ENCODE measurements at regions of chrX and their contacts with region 1.

Region 1: GRCh38 chrX:43002526-43003203 is 224.7 kb upstream of the PPP1R2C start:
- DNase-seq: peak; percentile 51
- ATAC-seq: peak; percentile 94
- H3K4me3 ChIP-seq: no peak overlapping the region
- H3K27ac ChIP-seq: peak overlapping the region; percentile 76; the same call in 1 of the 2 replicates
- H3K4me1 ChIP-seq: peaks cover 8% of the 10 kb centered on the region; the same call in 1 of the 2 replicates
- H3K27me3 ChIP-seq: no peaks in the 10 kb centered on the region
- CTCF ChIP-seq: no peak
- EP300 ChIP-seq: peak; percentile 38 to 75; a peak in 2 of 4 replicates
- POLR2A ChIP-seq: no peak
- RAD21 ChIP-seq: no peak

Region 2: GRCh38 chrX:42869659-42870476 is 132.8 kb before region 1 on chrX:
- CTCF ChIA-PET with region 1: no interaction called
- POLR2A ChIA-PET with region 1: no interaction called
- RAD21 ChIA-PET with region 1: no interaction called
- SMC1A ChIA-PET with region 1: no interaction called
- in situ Hi-C with region 1: no loop called
- intact Hi-C with region 1: loop called (anchors 5 kb)
- DNase-seq: peak; percentile 72
- ATAC-seq: peak; percentile 92
- H3K4me3 ChIP-seq: no peak overlapping the region
- H3K27ac ChIP-seq: peak overlapping the region; percentile 1; the same call in 1 of the 2 replicates
- H3K4me1 ChIP-seq: peaks cover 6% of the 10 kb centered on the region
- H3K27me3 ChIP-seq: no peaks in the 10 kb centered on the region
- CTCF ChIP-seq: no peak
- EP300 ChIP-seq: peak; percentile 48 to 75; a peak in 1 of 4 replicates
- POLR2A ChIP-seq: no peak
- RAD21 ChIP-seq: no peak

Region 3: DNA sequence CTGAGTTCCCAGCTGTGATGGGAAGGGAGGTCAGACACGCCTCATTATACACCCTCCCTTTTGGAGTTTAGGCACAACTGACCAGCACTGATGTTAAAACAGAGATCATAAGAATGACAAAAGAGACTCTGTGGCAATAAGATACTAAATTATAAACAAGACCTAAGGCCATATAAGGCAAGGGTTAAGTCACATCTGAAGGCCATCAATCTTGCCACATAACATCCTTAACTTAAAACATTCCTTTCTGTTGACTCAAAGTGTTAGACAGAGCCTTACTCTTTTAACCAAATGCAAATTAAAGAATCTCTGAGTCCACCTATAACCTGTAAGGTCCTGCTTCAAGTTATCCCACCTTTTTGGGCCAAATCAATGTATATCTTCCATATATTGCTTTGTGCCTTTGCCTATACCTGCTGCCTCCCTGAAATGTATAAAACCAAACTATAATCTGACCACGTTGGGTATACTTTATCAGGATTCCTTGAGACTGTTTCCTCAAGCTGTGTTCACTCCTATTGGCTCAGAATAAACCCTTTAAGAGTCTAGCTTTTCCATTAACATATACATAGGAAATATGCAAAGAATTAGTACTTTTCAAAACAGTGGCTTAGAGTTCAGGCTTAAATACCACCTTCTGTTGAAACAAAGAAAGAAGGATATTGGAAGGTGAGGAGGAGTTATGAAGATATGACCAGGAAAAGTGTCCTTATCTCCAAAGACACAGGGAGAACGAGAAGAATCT is 10.3 kb before region 1 on chrX:
- CTCF ChIA-PET with region 1: interaction called, 4 read pairs
- POLR2A ChIA-PET with region 1: no interaction called
- RAD21 ChIA-PET with region 1: interaction called, 7 read pairs
- SMC1A ChIA-PET with region 1: interaction called, 15 read pairs
- in situ Hi-C with region 1: no loop called
- intact Hi-C with region 1: no loop called
- DNase-seq: no peak
- ATAC-seq: no peak
- H3K4me3 ChIP-seq: no peak overlapping the region
- H3K27ac ChIP-seq: no peak overlapping the region
- H3K4me1 ChIP-seq: peaks cover 3% of the 10 kb centered on the region; the same call in 1 of the 2 replicates
- H3K27me3 ChIP-seq: no peaks in the 10 kb centered on the region
- CTCF ChIP-seq: no peak
- EP300 ChIP-seq: no peak
- POLR2A ChIP-seq: no peak
- RAD21 ChIP-seq: no peak